T-cell (primary cell): ENCODE measurements at regions of chr17 and their contacts with region 1.

Region 1: GRCh38 chr17:53724726-53725125 is 98.0 kb upstream of the KIF2B start:
- DNase-seq: no peak
- ATAC-seq: no peak
- H3K4me3 ChIP-seq: no peak overlapping the region
- H3K4me3 Mint-ChIP-seq: no peak overlapping the region
- H3K27ac ChIP-seq: no peak overlapping the region
- H3K27ac Mint-ChIP-seq: no peak overlapping the region
- H3K4me1 ChIP-seq: no peaks in the 10 kb centered on the region
- H3K4me1 Mint-ChIP-seq: no peaks in the 10 kb centered on the region
- H3K27me3 ChIP-seq: no peaks in the 10 kb centered on the region
- H3K27me3 Mint-ChIP-seq: no peaks in the 10 kb centered on the region

Region 2: GRCh38 chr17:52965856-52966255 is 758.9 kb before region 1 on chr17:
- CTCF ChIA-PET with region 1: no interaction called
- POLR2A ChIA-PET with region 1: no interaction called
- DNase-seq: no peak
- ATAC-seq: no peak
- H3K4me3 ChIP-seq: no peak overlapping the region
- H3K4me3 Mint-ChIP-seq: no peak overlapping the region
- H3K27ac ChIP-seq: no peak overlapping the region
- H3K27ac Mint-ChIP-seq: no peak overlapping the region
- H3K4me1 ChIP-seq: no peaks in the 10 kb centered on the region
- H3K4me1 Mint-ChIP-seq: no peaks in the 10 kb centered on the region
- H3K27me3 ChIP-seq: no peaks in the 10 kb centered on the region
- H3K27me3 Mint-ChIP-seq: no peaks in the 10 kb centered on the region

Region 3: GRCh38 chr17:53792997-53793396 is 68.3 kb after region 1 on chr17:
- CTCF ChIA-PET with region 1: no interaction called
- POLR2A ChIA-PET with region 1: no interaction called
- DNase-seq: no peak
- ATAC-seq: no peak
- H3K4me3 ChIP-seq: no peak overlapping the region
- H3K4me3 Mint-ChIP-seq: no peak overlapping the region
- H3K27ac ChIP-seq: no peak overlapping the region
- H3K27ac Mint-ChIP-seq: no peak overlapping the region
- H3K4me1 ChIP-seq: no peaks in the 10 kb centered on the region
- H3K4me1 Mint-ChIP-seq: no peaks in the 10 kb centered on the region
- H3K27me3 ChIP-seq: no peaks in the 10 kb centered on the region
- H3K27me3 Mint-ChIP-seq: no peaks in the 10 kb centered on the region

Region 4: GRCh38 chr17:53807286-53807685 is 82.6 kb after region 1 on chr17:
- CTCF ChIA-PET with region 1: interaction called in 1 of 2 experiments, 11 read pairs
- POLR2A ChIA-PET with region 1: no interaction called
- DNase-seq: no peak
- ATAC-seq: no peak
- H3K4me3 ChIP-seq: no peak overlapping the region
- H3K4me3 Mint-ChIP-seq: no peak overlapping the region
- H3K27ac ChIP-seq: no peak overlapping the region
- H3K27ac Mint-ChIP-seq: no peak overlapping the region
- H3K4me1 ChIP-seq: no peaks in the 10 kb centered on the region
- H3K4me1 Mint-ChIP-seq: no peaks in the 10 kb centered on the region
- H3K27me3 ChIP-seq: no peaks in the 10 kb centered on the region
- H3K27me3 Mint-ChIP-seq: no peaks in the 10 kb centered on the region